ENCODE measurements at regions of chr12 and their contacts with region 1.

Region 1: GRCh38 chr12:108356835-108357806 is 18.0 kb upstream of the CMKLR1 start:
- DNase-seq: no peak
- H3K4me3 ChIP-seq: no peak overlapping the region
- H3K27ac ChIP-seq: no peak overlapping the region
- H3K4me1 ChIP-seq: peaks cover 0 to 6% (median 1%) of the 10 kb centered on the region in 4 experiments; a peak in 4 of 7 replicates
- H3K27me3 ChIP-seq: no peaks in the 10 kb centered on the region
- CTCF ChIP-seq: no peak
- EP300 ChIP-seq: no peak
- POLR2A ChIP-seq: no peak
- RAD21 ChIP-seq: no peak

Region 2: GRCh38 chr12:108322998-108323397 is 34.1 kb before region 1 on chr12:
- CTCF ChIA-PET with region 1: no interaction called
- POLR2A ChIA-PET with region 1: no interaction called
- DNase-seq: no peak
- H3K4me3 ChIP-seq: no peak overlapping the region
- H3K27ac ChIP-seq: no peak overlapping the region
- H3K4me1 ChIP-seq: peaks cover 5 to 20% (median 8%) of the 10 kb centered on the region in 4 experiments; a peak in 6 of 7 replicates
- H3K27me3 ChIP-seq: no peaks in the 10 kb centered on the region
- CTCF ChIP-seq: no peak
- EP300 ChIP-seq: no peak
- POLR2A ChIP-seq: no peak
- RAD21 ChIP-seq: no peak

Region 3: GRCh38 chr12:108371801-108372344 is 14.8 kb after region 1 on chr12:
- CTCF ChIA-PET with region 1: interaction called, 14 read pairs
- POLR2A ChIA-PET with region 1: interaction called, 4 read pairs
- DNase-seq: no peak
- H3K4me3 ChIP-seq: no peak overlapping the region
- H3K27ac ChIP-seq: no peak overlapping the region
- H3K4me1 ChIP-seq: peaks cover 0 to 6% (median 0%) of the 10 kb centered on the region in 4 experiments; a peak in 1 of 7 replicates
- H3K27me3 ChIP-seq: no peaks in the 10 kb centered on the region
- CTCF ChIP-seq: no peak
- EP300 ChIP-seq: no peak
- POLR2A ChIP-seq: no peak
- RAD21 ChIP-seq: no peak